H1 (cell line): ENCODE measurements at regions of chr10 and their contacts with region 1.

Region 1: GRCh38 chr10:95480102-95480900 is 80.9 kb downstream of the SORBS1 start:
- DNase-seq: no peak
- H3K4me3 ChIP-seq: no peak overlapping the region
- H3K27ac ChIP-seq: 0 out of 2 replicates have a peak overlapping the region, but pooled peaks have one; percentile 21
- H3K4me1 ChIP-seq: peaks cover 13 to 31% (median 20%) of the 10 kb centered on the region in 4 experiments
- H3K27me3 ChIP-seq: no peaks in the 10 kb centered on the region
- CTCF ChIP-seq: peak in 1 of 3 experiments; percentile 34; a peak in 1 of 4 replicates
- EP300 ChIP-seq: no peak
- POLR2A ChIP-seq: no peak
- RAD21 ChIP-seq: no peak; a peak in 1 of 4 replicates

Region 2: GRCh38 chr10:95333997-95334804 is 146.1 kb before region 1 on chr10:
- CTCF ChIA-PET with region 1: no interaction called
- POLR2A ChIA-PET with region 1: no interaction called
- DNase-seq: no peak
- H3K4me3 ChIP-seq: no peak overlapping the region
- H3K27ac ChIP-seq: no peak overlapping the region
- H3K4me1 ChIP-seq: peaks cover 0 to 7% (median 0%) of the 10 kb centered on the region in 4 experiments; a peak in 1 of 7 replicates
- H3K27me3 ChIP-seq: no peaks in the 10 kb centered on the region
- CTCF ChIP-seq: no peak
- EP300 ChIP-seq: no peak
- POLR2A ChIP-seq: no peak
- RAD21 ChIP-seq: no peak

Region 3: GRCh38 chr10:95469676-95470075 is 10.6 kb before region 1 on chr10:
- CTCF ChIA-PET with region 1: interaction called, 21 read pairs
- POLR2A ChIA-PET with region 1: interaction called, 3 read pairs
- DNase-seq: no peak
- H3K4me3 ChIP-seq: no peak overlapping the region
- H3K27ac ChIP-seq: no peak overlapping the region
- H3K4me1 ChIP-seq: peaks cover 2 to 18% (median 14%) of the 10 kb centered on the region in 4 experiments; a peak in 6 of 7 replicates
- H3K27me3 ChIP-seq: no peaks in the 10 kb centered on the region
- CTCF ChIP-seq: no peak
- EP300 ChIP-seq: no peak
- POLR2A ChIP-seq: no peak
- RAD21 ChIP-seq: no peak

Region 4: DNA sequence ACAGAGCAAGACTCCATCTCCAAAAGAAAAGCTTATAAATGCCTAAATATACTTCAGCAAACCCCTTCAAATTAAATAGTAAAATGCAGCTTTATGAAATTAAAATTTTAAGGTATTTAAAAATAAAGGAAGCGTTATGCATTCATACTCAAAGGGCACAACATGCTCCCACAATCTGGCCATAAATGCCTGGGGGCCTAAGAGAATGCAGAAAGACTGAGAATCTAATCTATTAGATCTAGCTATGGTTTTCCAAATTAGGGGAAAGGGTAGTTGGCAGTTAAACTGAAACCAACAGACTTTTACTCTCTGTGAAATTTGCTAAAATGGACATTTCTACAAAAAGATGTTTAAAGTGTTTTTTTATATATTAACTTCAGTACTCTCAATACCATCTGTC is 40.3 kb after region 1 on chr10:
- CTCF ChIA-PET with region 1: no interaction called
- POLR2A ChIA-PET with region 1: no interaction called
- DNase-seq: no peak
- H3K4me3 ChIP-seq: no peak overlapping the region
- H3K27ac ChIP-seq: no peak overlapping the region
- H3K4me1 ChIP-seq: peaks cover 5 to 13% (median 6%) of the 10 kb centered on the region in 4 experiments; a peak in 6 of 7 replicates
- H3K27me3 ChIP-seq: no peaks in the 10 kb centered on the region
- CTCF ChIP-seq: no peak
- EP300 ChIP-seq: no peak
- POLR2A ChIP-seq: no peak
- RAD21 ChIP-seq: no peak

Region 5: GRCh38 chr10:95531994-95532399 is 51.7 kb after region 1 on chr10:
- CTCF ChIA-PET with region 1: interaction called, 10 read pairs
- POLR2A ChIA-PET with region 1: no interaction called
- DNase-seq: no peak
- H3K4me3 ChIP-seq: no peak overlapping the region
- H3K27ac ChIP-seq: no peak overlapping the region; the same call in 1 of the 2 replicates
- H3K4me1 ChIP-seq: peaks cover 2 to 9% (median 5%) of the 10 kb centered on the region in 4 experiments; a peak in 5 of 7 replicates
- H3K27me3 ChIP-seq: no peaks in the 10 kb centered on the region
- CTCF ChIP-seq: no peak
- EP300 ChIP-seq: no peak
- POLR2A ChIP-seq: no peak
- RAD21 ChIP-seq: no peak